Heart left ventricle (tissue), 16 donors: ENCODE measurements at regions of chr5 and their contacts with region 1.

Region 1: DNA sequence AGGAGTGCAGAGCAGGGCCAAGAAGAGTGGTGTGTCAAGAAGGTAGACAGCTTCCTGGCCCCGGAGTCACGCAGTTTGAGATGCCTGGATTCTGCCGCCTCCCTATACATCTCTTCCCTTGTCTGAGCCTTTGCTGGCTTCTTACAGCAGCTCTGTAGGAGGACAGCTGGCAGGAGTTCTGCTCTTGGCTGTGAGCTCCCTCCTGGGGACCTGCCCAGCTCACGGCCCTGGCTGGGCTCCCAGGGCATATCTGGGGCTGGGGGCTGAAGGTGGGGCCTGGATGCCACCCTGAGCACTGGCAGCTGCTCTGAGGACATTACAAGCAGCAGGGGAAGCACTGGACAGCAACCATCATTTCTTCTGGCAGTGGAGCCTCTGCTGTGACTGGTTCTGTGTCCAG is 786 bp upstream of the TSSK1B start:
- DNase-seq: peak in 1 of 5 donors; percentile 55
- ATAC-seq: peak; percentile 61 to 76 (median 74)
- H3K4me3 ChIP-seq: no peak overlapping the region
- H3K27ac ChIP-seq: no peak overlapping the region
- H3K4me1 ChIP-seq: peaks cover 0 to 11% (median 5%) of the 10 kb centered on the region in 12 donors
- H3K27me3 ChIP-seq: no peaks in the 10 kb centered on the region
- CTCF ChIP-seq: no peak
- POLR2A ChIP-seq: no peak

Region 2: DNA sequence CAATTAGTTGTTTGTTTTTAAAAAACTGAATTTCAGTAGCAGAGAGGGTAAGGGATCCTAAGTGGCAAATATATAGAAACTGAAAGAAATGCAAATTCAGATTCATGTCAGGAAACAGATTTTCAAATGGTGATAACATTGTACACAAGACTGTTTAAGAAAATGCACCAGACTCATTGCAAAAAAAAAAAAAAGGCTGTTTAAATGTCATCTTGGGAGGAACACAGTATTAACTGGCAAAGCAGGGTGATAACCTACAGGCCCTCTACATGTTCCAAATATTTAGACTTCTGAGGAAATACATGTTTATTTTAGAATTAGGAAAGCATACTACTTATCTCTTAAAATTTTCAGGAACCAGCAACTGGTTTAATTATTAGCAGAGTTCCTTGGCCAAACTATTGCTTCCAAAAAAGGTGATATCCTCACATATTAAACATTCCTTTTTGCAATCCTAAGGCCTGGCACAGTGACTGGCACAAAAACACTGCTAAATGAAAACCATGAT is 115.2 kb before region 1 on chr5:
- intact Hi-C with region 1: no loop called
- DNase-seq: no peak
- ATAC-seq: no peak
- H3K4me3 ChIP-seq: no peak overlapping the region
- H3K27ac ChIP-seq: peak overlapping the region in 1 of 12 donors; percentile 13
- H3K4me1 ChIP-seq: peaks cover 0 to 18% (median 5%) of the 10 kb centered on the region in 12 donors
- H3K27me3 ChIP-seq: no peaks in the 10 kb centered on the region
- CTCF ChIP-seq: no peak
- POLR2A ChIP-seq: no peak

Region 3: DNA sequence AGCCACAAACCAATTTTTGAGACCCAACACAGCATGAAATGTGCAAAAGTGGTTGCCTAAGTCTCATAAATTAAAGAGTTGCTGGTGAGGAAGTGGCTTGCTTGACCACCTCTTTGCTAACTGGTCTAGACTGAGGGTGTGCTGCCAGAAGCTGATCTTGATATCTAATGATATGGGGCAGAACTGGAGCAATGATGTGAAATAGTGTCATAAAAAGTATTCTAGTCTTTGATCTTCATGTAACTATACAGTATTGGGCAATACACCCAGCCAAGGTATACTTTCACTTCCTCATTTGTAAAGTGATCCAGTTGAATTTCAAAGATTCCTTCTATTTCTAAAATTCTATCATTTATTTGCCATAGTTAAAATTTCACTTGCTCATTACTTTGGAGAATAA is 72.0 kb after region 1 on chr5:
- intact Hi-C with region 1: loop called in 1 of 10 experiments (anchors 5 kb)
- DNase-seq: no peak
- ATAC-seq: no peak
- H3K4me3 ChIP-seq: no peak overlapping the region
- H3K27ac ChIP-seq: no peak overlapping the region
- H3K4me1 ChIP-seq: peaks cover 0 to under 1% (median 0%) of the 10 kb centered on the region in 12 donors
- H3K27me3 ChIP-seq: peaks cover 0 to 23% (median 0%) of the 10 kb centered on the region in 9 donors
- CTCF ChIP-seq: no peak
- POLR2A ChIP-seq: no peak

Region 4: DNA sequence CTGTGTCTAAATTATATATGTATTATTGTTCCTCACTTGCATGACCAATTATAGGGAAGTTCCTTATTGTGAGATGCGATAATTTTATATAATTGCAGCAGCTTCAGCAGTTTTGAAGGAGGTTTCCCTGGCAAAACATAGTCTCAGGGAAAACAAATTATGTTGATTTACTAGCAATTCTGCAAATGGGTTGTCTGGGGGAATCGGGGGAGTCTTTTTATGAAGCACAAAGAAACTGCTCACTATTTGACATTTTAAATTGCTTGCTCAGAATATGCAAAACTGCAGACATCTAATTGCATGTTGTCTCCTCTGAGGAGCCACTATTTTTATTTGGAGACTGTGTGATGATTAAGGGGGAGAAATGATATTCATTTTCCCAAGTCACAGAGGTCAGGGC is 439.5 kb after region 1 on chr5:
- intact Hi-C with region 1: no loop called
- DNase-seq: no peak
- ATAC-seq: no peak
- H3K4me3 ChIP-seq: no peak overlapping the region
- H3K27ac ChIP-seq: no peak overlapping the region
- H3K4me1 ChIP-seq: no peaks in the 10 kb centered on the region
- H3K27me3 ChIP-seq: peaks cover 0 to 8% (median 0%) of the 10 kb centered on the region in 9 donors
- CTCF ChIP-seq: no peak
- POLR2A ChIP-seq: no peak